ENCODE measurements at regions of chr1 and their contacts with region 1.

Region 1: DNA sequence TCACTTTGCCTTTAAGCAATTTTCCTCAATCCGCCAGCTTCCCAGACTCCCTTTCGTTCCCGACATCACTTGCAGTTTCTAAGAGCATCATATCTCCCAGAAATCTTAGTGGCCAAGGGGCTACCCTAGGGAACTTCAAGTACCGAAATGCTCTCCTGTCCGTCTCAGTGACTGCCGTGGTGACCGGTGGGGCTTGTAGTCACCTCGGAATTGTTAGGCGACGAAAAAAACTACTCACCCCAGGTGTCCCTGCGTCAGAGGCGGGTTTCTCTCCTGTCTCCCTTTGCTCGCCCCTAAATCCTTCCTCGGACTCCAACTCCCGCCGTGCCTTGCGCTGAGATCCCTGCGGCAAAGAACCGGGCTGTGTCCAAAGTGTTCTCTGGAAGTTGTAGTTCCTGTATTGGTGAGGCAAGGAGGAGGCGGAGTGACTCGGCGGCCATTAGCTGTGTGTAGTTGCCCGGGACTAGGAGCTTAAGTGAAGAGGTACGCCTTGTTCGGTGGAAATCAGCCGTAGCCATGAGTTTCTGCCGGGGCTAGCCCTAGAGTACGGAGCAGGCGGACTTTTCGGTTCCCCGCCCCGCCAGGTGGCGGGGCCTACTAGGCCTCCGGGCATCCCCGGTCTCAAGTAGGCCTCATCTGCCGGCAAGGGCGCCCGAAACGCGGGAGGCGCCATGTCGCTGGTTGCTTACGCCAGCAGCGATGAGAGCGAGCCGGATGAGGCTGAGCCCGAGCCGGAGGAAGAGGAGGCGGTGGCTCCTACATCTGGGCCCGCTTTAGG is at the start of gene PRCC:
- DNase-seq: peak; percentile 99
- H3K4me3 Mint-ChIP-seq: no peak within 1 kb of the TSS
- H3K27ac Mint-ChIP-seq: no peak within 1 kb of the TSS
- H3K4me1 Mint-ChIP-seq: peaks cover 41% of the 10 kb centered on the region
- H3K27me3 Mint-ChIP-seq: no peaks in the 10 kb centered on the region
- total RNA-seq, gene PRCC: 70.6 to 87.7 TPM

Region 2: DNA sequence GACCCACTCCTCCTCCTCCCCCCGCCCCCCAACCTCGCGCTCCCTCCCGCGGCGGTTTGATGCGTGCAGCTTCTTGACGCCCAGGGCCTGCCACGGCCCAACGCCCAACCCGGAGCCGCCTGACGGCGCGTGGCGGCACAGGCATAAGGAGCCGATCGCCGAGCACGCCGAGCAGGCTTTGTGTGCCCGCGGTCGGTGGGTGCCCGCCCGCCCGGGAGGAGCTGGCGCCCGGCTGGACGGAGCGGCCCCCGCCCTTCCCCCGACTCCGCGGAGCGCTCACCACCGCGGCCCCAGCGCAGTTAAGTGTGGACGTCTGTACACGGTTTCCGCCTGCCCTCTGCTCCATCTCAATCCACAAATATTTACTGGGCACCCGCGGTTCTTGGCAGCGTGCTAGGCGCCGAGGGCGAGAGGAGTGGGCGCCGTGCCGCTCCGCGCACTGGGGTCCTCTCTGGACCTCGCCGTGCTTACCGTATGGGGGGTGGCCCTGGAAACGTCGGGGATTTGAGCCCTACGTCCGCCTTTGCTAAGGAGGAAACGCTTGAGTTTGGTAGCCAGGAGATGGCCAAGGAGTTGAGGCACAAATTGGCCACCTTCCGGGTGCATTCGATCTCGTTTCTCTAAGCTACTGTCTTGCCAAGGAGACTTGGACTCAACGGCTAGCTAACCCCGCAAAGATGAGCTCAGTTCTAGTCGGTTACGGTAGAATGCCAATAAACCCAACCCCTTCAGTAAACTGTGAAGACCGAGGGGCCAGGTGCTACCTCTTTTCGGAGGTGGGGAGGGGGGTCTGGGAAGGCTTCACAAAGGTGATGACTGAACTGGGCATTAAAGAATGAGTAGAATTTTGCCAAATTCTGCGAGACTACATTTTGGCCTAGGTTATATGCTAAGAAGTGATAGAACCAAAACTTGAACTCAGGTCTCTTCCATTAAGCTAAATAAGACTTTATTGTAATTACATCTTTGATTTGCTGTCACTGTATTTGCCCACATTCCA is 15.2 kb before region 1 on chr1:
- CTCF ChIA-PET with region 1: interaction called, 11 read pairs
- POLR2A ChIA-PET with region 1: interaction called, 5 read pairs
- DNase-seq: peak; percentile 98
- H3K4me3 Mint-ChIP-seq: peak overlapping the region; percentile 90
- H3K27ac Mint-ChIP-seq: peak overlapping the region; percentile 95
- H3K4me1 Mint-ChIP-seq: peaks cover 48% of the 10 kb centered on the region
- H3K27me3 Mint-ChIP-seq: no peaks in the 10 kb centered on the region

Region 3: DNA sequence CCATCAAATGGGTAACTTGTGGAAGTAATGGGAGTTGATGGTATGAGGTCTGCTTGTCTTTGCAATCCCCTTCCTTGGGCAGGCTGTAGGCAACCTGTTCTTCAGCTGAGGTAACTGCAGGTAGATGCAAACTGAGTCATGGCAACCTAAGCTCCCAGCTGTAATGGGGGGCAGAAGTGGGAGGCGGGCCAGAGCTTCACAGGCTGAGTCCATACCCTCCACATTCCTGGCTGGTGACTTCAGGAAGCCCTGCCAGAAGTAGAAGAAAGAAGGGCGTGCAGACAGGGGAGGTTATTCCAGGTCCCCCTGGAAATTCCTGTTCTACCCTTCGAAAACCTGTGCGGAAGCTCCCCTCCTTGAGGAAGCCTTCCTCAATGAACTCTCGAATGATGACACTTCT is 233.4 kb after region 1 on chr1:
- CTCF ChIA-PET with region 1: no interaction called
- POLR2A ChIA-PET with region 1: no interaction called
- DNase-seq: no peak
- H3K4me3 Mint-ChIP-seq: no peak overlapping the region
- H3K27ac Mint-ChIP-seq: no peak overlapping the region
- H3K4me1 Mint-ChIP-seq: no peaks in the 10 kb centered on the region
- H3K27me3 Mint-ChIP-seq: peaks cover 27% of the 10 kb centered on the region